ENCODE measurements at regions of chr5 and their contacts with region 1.

Region 1: GRCh38 chr5:141878711-141879425 is 658 bp upstream of the PCDH1 start:
- DNase-seq: peak; percentile 93

Region 2: DNA sequence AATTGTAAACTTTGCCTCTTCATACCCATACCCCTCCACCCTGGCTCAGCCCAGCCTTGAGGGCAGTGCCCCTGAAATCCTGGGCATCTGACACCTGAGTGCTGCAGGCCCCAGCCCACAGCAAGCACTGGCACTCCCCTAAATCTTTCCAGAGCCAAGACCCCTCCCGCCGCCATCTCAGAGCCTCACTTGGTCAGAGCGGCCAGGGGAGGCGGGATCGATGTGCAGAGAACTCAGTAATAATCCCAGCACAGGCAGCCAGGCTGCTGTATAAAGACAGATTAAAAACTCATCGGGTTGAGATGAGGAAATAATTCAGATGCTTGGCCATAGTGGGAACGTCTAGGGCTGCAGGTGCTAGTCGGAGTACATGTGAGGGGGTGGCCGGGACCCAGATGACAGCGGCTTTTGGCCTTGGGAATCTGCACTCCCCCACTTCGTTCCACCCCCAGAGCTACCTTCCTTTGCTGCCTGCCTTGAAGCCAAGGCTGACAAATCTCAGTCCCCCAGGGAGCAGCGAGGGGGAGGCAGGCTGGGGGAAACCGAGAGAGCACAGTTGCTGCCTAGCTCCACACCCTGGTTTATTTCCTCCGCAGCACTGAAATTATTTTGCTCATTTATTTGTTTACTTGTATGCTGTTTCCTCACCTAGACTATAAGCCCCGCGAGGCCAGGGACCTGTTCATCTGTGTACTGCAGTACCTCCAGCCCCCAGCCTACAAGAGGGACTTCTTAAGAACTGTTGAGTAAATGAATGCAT is 177.3 kb before region 1 on chr5:
- intact Hi-C with region 1: loop called (anchors 2 kb)
- DNase-seq: no peak

Region 3: GRCh38 chr5:141805874-141806595 is 72.8 kb before region 1 on chr5:
- intact Hi-C with region 1: loop called (anchors 5 kb)
- DNase-seq: no peak

Region 4: DNA sequence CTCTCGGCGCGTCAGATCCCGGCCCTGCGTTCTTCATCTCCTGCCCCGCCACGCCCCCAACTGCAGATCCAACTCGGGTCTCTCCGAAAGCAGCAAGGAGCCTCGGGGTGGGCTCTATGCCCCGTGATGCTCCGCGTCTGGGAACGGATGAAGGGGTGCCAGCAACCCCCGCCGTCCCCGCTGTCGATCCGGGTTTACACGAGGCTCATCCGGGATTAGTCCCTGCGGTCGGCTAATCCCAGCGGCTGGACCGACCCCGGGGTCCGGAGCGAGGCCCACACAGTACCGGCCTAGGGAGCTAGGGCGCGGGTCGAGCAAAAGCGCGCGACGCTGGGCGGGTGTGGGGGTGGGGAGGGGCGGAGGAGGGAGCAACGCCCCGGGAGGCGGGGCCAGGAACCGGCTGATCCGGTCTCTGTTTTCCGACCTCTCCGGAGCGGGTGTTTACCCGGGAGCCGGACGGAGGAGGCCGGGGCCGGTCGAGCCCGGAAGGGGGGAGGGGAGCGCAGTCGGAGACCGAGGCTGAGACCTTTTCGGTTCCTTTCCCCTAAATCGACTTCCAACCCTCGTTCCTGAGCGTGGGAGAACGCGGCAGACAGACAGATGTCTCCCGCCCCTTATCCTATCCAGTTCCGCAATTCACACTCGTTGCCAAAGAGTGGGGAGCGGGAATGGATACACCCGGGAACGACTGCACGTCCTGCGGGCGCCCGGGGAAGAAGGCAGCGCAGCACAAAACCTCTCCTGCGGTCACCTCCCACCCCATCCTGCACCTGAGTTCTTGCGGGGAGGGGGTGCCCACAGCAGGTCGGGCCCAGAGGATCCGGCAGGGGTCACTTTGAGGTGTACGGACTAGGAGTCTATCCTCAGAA is 29.3 kb before region 1 on chr5:
- intact Hi-C with region 1: loop called (anchors 2 kb)
- DNase-seq: peak; percentile 95

Region 5: DNA sequence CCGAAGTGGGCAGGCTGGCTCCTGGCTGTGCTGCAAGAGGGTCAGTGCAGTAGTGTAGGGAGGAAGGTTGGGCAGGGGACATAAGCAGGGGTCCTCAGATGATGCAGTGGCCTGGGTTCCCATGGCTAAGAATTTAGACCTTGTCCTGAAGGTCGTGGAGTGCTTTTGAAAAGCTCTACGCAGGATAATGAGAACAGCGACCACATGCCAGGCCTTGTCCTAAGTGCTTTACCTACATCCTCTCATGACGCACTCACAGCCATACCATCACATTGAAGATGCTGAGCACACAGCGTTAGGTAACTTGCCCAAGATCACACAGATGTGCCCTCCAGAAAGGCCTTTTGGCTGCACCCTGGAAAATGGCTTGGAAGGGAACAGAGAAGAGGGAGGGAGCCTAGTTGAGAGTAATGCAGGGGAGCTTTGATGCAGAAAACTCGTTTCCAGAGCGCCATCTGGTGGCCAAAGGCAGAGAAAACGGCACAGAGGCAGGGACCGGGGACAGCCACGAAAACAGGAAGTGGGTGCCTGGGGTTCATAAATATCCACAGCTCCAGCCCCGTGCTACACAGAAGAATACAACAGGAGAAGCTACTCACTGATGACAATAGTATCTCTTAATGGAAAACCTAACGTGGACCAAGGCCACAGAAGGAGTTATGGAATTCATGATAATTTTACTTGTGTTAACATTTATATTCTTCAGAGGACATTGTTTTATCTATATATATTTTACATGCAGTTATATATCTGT is 81.8 kb after region 1 on chr5:
- intact Hi-C with region 1: loop called (anchors 2 kb)
- DNase-seq: peak; percentile 95

Measured in cardiac septum (tissue), 1 donor.